MCF 10A (cell line): ENCODE measurements at regions of chr1 and their contacts with region 1.

Region 1: GRCh38 chr1:35451125-35451528 is 106.1 kb downstream of the KIAA0319L start:
- DNase-seq: peak; percentile 82
- H3K4me3 Mint-ChIP-seq: peak overlapping the region; percentile 0
- H3K27ac Mint-ChIP-seq: no peak overlapping the region
- H3K4me1 Mint-ChIP-seq: peaks cover 19% of the 10 kb centered on the region
- H3K27me3 Mint-ChIP-seq: no peaks in the 10 kb centered on the region
- CTCF ChIP-seq: peak; percentile 83

Region 2: DNA sequence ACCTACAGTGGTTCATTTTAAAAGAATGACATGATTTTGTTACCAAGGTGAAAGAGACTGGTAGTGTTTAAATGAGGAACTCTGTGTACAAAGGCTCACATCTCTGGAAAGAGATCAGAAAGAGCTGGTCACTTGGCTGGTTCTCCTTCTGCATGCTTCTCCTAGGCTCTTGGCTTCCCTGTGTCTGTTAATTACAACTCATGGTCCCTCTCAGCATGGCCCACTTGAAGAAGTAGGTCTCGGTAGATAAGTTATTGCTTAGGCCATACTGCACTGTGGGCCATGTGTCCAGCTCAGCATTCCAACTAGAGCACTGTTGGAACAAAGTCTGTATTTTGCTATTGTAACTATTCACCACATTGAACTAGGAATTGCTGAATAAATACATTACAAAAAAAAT is 15.0 kb after region 1 on chr1:
- CTCF ChIA-PET with region 1: interaction called, 30 read pairs
- POLR2A ChIA-PET with region 1: interaction called, 4 read pairs
- intact Hi-C with region 1: no loop called
- DNase-seq: no peak
- H3K4me3 Mint-ChIP-seq: no peak overlapping the region
- H3K27ac Mint-ChIP-seq: no peak overlapping the region
- H3K4me1 Mint-ChIP-seq: peaks cover 10% of the 10 kb centered on the region
- H3K27me3 Mint-ChIP-seq: no peaks in the 10 kb centered on the region
- CTCF ChIP-seq: no peak

Region 3: DNA sequence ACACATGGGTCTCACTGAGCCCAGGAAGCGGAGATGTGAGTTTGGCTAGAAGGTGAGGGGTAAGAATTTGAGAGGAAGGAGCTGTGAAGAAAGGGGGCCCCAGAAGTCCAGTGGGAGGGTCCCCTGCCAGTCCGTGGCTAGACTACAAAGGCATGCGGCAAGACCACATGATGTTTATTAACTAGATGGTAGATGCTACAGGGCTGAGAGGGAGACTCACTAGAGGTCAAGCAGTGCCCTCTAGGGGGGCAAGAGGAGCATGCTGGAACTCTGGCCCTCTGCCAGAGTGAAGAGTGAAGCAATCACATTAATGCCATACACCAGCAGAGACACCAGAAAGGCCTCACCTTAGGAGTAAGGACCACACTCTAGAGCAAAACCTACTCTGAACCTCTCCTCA is 93.9 kb after region 1 on chr1:
- CTCF ChIA-PET with region 1: interaction called, 22 read pairs
- POLR2A ChIA-PET with region 1: no interaction called
- intact Hi-C with region 1: no loop called
- DNase-seq: peak; percentile 76
- H3K4me3 Mint-ChIP-seq: no peak overlapping the region
- H3K27ac Mint-ChIP-seq: no peak overlapping the region
- H3K4me1 Mint-ChIP-seq: peaks cover 21% of the 10 kb centered on the region
- H3K27me3 Mint-ChIP-seq: no peaks in the 10 kb centered on the region
- CTCF ChIP-seq: peak; percentile 32

Region 4: GRCh38 chr1:35564037-35564883 is 113.1 kb after region 1 on chr1:
- CTCF ChIA-PET with region 1: interaction called, 177 read pairs
- POLR2A ChIA-PET with region 1: interaction called, 212 read pairs
- intact Hi-C with region 1: loop called (anchors 1 kb)
- DNase-seq: peak; percentile 90
- H3K4me3 Mint-ChIP-seq: no peak overlapping the region
- H3K27ac Mint-ChIP-seq: no peak overlapping the region
- H3K4me1 Mint-ChIP-seq: peaks cover 32% of the 10 kb centered on the region
- H3K27me3 Mint-ChIP-seq: no peaks in the 10 kb centered on the region
- CTCF ChIP-seq: peak; percentile 79

Region 5: GRCh38 chr1:35691080-35691479 is 240.0 kb after region 1 on chr1:
- CTCF ChIA-PET with region 1: no interaction called
- POLR2A ChIA-PET with region 1: no interaction called
- intact Hi-C with region 1: no loop called
- DNase-seq: no peak
- H3K4me3 Mint-ChIP-seq: no peak overlapping the region
- H3K27ac Mint-ChIP-seq: no peak overlapping the region
- H3K4me1 Mint-ChIP-seq: no peaks in the 10 kb centered on the region
- H3K27me3 Mint-ChIP-seq: peaks cover 42% of the 10 kb centered on the region
- CTCF ChIP-seq: no peak

Region 6: GRCh38 chr1:35715568-35716002 is 264.5 kb after region 1 on chr1:
- CTCF ChIA-PET with region 1: interaction called, 16 read pairs
- POLR2A ChIA-PET with region 1: interaction called, 3 read pairs
- intact Hi-C with region 1: loop called (anchors 2 kb)
- DNase-seq: peak; percentile 82
- H3K4me3 Mint-ChIP-seq: no peak overlapping the region
- H3K27ac Mint-ChIP-seq: no peak overlapping the region
- H3K4me1 Mint-ChIP-seq: peaks cover 37% of the 10 kb centered on the region
- H3K27me3 Mint-ChIP-seq: no peaks in the 10 kb centered on the region
- CTCF ChIP-seq: peak; percentile 80